T-cell (primary cell): ENCODE measurements at regions of chr14 and their contacts with region 1.

Region 1: DNA sequence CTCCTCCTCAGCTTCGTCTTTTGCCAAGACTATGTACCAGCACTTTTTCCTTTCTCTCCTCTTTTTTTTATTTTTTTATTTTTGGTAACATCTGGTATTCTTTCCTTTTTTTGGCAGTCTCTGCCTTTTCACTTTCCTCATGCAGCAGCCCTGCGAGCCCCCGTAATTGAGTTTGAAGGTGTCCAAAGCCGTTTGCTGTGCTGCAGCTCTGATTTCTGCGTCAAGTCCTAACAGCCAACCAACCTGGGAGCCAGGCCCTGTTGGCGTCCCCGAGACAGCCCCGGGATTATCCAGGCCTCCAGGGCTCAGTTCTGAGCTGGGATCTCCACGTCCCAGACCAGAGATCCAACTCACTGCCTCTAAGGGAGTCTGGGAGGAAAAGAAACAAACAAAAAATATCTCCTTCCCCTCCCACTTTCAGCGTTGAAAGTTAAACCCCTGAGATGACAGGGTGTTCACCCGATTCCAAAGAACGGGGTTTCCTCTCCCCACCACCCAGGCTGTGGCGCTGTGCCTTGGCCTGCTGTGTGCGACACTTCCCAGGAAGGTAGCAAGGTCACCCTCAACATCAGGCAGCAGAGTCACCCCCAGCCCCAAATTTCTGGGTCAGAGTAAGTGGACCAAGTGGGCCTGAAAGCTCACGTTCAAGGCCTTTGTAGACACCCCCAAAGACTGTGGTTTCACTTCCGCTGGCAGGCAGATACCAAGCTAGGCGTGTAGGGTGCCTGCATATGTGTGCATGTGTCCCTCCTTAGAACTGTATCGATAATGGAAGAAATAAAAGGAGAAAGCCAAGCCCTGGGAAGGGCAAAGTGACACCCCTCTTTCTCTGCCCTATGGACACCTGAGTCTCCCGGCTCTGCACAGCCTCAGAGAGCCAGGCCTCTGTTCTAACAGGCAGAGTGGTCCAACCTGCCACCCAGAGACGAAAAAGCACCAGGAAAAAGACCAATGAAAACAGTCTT is 11.1 kb downstream of the BCL11B start:
- DNase-seq: peak in 34 of 35 experiments; percentile 57 to 83 (median 70)
- ATAC-seq: peak; percentile 15 to 64 (median 54)
- H3K4me3 ChIP-seq: peak overlapping the region; percentile 28 to 90
- H3K4me3 Mint-ChIP-seq: peak overlapping the region; percentile 94 to 98 (median 96)
- H3K27ac ChIP-seq: peak overlapping the region; percentile 99
- H3K27ac Mint-ChIP-seq: peak overlapping the region; percentile 99 to 100
- H3K4me1 ChIP-seq: peaks cover 67 to 87% of the 10 kb centered on the region in 2 experiments
- H3K4me1 Mint-ChIP-seq: peaks cover 97 to 99% (median 98%) of the 10 kb centered on the region in 3 donors
- H3K27me3 ChIP-seq: no peaks in the 10 kb centered on the region
- H3K27me3 Mint-ChIP-seq: no peaks in the 10 kb centered on the region

Region 2: DNA sequence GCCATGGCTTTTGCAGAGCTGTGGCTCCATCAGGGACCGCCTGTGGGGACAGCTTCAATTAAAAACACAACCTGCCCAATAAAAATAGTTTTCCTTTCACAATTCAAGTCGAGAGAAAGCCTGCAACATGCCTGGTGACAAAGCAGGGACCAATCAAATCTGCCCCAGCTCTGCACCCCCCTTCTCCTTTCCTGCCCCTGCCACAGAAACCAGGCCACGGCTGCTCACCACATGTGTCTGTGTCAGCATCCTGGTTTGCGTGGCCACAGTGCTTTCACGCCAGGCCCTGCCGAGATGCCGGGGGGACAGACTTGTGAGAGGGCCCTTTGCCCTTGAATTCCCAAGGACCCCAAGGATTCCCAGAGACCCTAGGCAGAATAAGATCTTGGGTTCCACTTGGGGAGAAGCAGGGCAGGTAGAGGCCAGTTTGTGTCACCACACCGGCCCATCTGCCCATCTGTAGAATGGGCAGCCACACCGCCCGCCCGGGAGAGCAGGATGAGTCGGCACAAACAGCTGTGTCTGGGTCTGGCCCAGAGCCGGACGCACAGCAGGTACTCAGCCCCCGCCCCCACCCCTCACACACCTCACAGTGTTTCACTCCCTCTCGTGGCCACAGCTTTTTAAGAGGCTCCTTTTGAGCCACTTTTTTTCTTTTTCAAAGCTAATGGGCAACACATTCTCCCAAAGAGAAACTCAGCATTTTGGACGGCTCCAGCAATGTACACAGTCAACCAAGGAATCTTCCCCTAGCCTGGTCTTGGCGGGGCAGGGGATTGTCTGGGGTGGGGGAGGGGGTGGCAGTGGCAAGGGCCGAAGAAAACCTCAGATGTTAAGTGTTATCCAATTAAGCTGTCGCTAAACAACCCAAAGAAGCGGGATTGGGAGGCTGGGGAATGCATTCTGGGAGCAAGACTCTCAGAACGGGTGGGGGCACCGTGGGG is 30.4 kb before region 1 on chr14:
- CTCF ChIA-PET with region 1: interaction called, 4 to 75 read pairs
- POLR2A ChIA-PET with region 1: interaction called, 4 to 15 read pairs
- DNase-seq: peak; percentile 58 to 91 (median 84)
- ATAC-seq: peak; percentile 63 to 71 (median 68)
- H3K4me3 ChIP-seq: peak overlapping the region in 1 of 2 donors; percentile 29
- H3K4me3 Mint-ChIP-seq: peak overlapping the region; percentile 62 to 96 (median 76)
- H3K27ac ChIP-seq: peak overlapping the region; percentile 99
- H3K27ac Mint-ChIP-seq: peak overlapping the region; percentile 98 to 99
- H3K4me1 ChIP-seq: peaks cover 80 to 100% of the 10 kb centered on the region in 2 experiments
- H3K4me1 Mint-ChIP-seq: peaks cover 94 to 96% (median 95%) of the 10 kb centered on the region in 3 donors
- H3K27me3 ChIP-seq: no peaks in the 10 kb centered on the region
- H3K27me3 Mint-ChIP-seq: no peaks in the 10 kb centered on the region